B cell (primary cell): ENCODE measurements at regions of chr2 and their contacts with region 1.

Region 1: DNA sequence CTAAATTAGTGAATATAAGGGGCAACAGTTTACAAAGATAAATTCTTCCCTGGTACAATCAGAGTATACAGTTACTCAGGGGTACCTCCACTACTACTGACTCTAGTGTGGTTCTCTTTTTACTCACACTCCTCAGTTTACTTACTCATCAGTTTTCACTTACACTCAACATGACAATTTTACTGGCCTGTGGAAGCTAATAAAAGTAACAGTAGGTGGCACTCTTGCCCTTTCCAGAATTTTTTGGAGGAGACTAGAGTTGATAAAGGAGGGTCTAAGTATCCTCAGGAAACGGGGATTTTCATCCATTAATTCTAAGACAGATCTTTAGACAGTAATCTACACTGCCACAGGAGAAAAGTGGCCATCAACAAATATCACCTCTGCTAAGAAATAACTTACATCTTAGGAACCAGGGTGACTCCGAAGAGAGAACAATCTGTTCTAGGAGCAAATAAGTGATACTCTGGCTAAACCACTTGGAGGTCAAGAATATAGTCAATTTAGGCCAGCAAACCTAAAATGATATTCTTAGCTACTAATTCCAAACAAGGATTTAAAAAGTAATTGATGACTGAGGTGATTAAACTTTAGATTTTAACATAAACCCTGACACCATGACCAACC is 61.3 kb downstream of the ATL2 start:
- DNase-seq: peak; percentile 61
- ATAC-seq: peak; percentile 47
- H3K4me3 ChIP-seq: no peak overlapping the region
- H3K4me3 Mint-ChIP-seq: no peak overlapping the region
- H3K27ac ChIP-seq: no peak overlapping the region
- H3K27ac Mint-ChIP-seq: no peak overlapping the region
- H3K4me1 ChIP-seq: no peaks in the 10 kb centered on the region
- H3K4me1 Mint-ChIP-seq: no peaks in the 10 kb centered on the region
- H3K27me3 ChIP-seq: no peaks in the 10 kb centered on the region
- H3K27me3 Mint-ChIP-seq: no peaks in the 10 kb centered on the region
- CTCF ChIP-seq: peak; percentile 76

Region 2: DNA sequence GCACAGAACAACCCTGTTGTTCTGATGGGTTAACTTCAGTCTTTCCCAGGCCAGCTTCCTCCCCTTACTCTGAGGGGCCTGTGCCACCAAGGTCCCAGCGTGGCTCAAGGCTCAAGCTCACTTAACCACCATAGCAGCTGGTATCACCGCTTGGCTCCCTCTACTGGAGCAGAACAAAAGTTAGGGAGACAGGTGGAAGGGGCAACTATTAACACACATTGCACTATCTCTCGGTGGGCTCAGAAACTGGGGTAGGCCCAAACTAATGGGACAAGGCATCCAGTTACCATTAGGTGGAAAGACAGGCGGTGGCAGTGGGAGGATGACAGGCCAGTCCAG is 149.9 kb after region 1 on chr2:
- CTCF ChIA-PET with region 1: interaction called, 40 read pairs
- POLR2A ChIA-PET with region 1: no interaction called
- intact Hi-C with region 1: loop called (anchors 1 kb)
- DNase-seq: peak; percentile 30
- ATAC-seq: no peak
- H3K4me3 ChIP-seq: no peak overlapping the region
- H3K4me3 Mint-ChIP-seq: no peak overlapping the region
- H3K27ac ChIP-seq: no peak overlapping the region
- H3K27ac Mint-ChIP-seq: no peak overlapping the region
- H3K4me1 ChIP-seq: no peaks in the 10 kb centered on the region
- H3K4me1 Mint-ChIP-seq: no peaks in the 10 kb centered on the region
- H3K27me3 ChIP-seq: no peaks in the 10 kb centered on the region
- H3K27me3 Mint-ChIP-seq: peaks cover 16% of the 10 kb centered on the region
- CTCF ChIP-seq: peak; percentile 18

Region 3: GRCh38 chr2:38480617-38481016 is 164.8 kb after region 1 on chr2:
- CTCF ChIA-PET with region 1: no interaction called
- POLR2A ChIA-PET with region 1: no interaction called
- intact Hi-C with region 1: no loop called
- DNase-seq: no peak
- ATAC-seq: no peak
- H3K4me3 ChIP-seq: no peak overlapping the region
- H3K4me3 Mint-ChIP-seq: no peak overlapping the region
- H3K27ac ChIP-seq: no peak overlapping the region
- H3K27ac Mint-ChIP-seq: no peak overlapping the region
- H3K4me1 ChIP-seq: no peaks in the 10 kb centered on the region
- H3K4me1 Mint-ChIP-seq: no peaks in the 10 kb centered on the region
- H3K27me3 ChIP-seq: peaks cover 0 to 3% (median 0%) of the 10 kb centered on the region in 4 experiments
- H3K27me3 Mint-ChIP-seq: peaks cover 9% of the 10 kb centered on the region
- CTCF ChIP-seq: no peak

Region 4: GRCh38 chr2:38498045-38498481 is 182.2 kb after region 1 on chr2:
- CTCF ChIA-PET with region 1: interaction called, 10 read pairs
- POLR2A ChIA-PET with region 1: no interaction called
- intact Hi-C with region 1: no loop called
- DNase-seq: peak; percentile 62
- ATAC-seq: peak; percentile 95
- H3K4me3 ChIP-seq: peak overlapping the region in 1 of 5 experiments; percentile 3
- H3K4me3 Mint-ChIP-seq: peak overlapping the region; percentile 48
- H3K27ac ChIP-seq: peak overlapping the region in 1 of 2 donors; percentile 49
- H3K27ac Mint-ChIP-seq: peak overlapping the region; percentile 67
- H3K4me1 ChIP-seq: peaks cover 10 to 21% of the 10 kb centered on the region in 2 donors
- H3K4me1 Mint-ChIP-seq: peaks cover 15% of the 10 kb centered on the region
- H3K27me3 ChIP-seq: peaks cover 0 to 4% (median 0%) of the 10 kb centered on the region in 4 experiments
- H3K27me3 Mint-ChIP-seq: peaks cover 9% of the 10 kb centered on the region
- CTCF ChIP-seq: no peak

Region 5: GRCh38 chr2:38515160-38516074 is 199.6 kb after region 1 on chr2:
- CTCF ChIA-PET with region 1: interaction called, 191 read pairs
- POLR2A ChIA-PET with region 1: no interaction called
- intact Hi-C with region 1: no loop called
- DNase-seq: no peak
- ATAC-seq: no peak
- H3K4me3 ChIP-seq: no peak overlapping the region
- H3K4me3 Mint-ChIP-seq: no peak overlapping the region
- H3K27ac ChIP-seq: no peak overlapping the region
- H3K27ac Mint-ChIP-seq: no peak overlapping the region
- H3K4me1 ChIP-seq: no peaks in the 10 kb centered on the region
- H3K4me1 Mint-ChIP-seq: no peaks in the 10 kb centered on the region
- H3K27me3 ChIP-seq: peaks cover 0 to 5% (median 0%) of the 10 kb centered on the region in 4 experiments
- H3K27me3 Mint-ChIP-seq: peaks cover 13% of the 10 kb centered on the region
- CTCF ChIP-seq: no peak

Region 6: DNA sequence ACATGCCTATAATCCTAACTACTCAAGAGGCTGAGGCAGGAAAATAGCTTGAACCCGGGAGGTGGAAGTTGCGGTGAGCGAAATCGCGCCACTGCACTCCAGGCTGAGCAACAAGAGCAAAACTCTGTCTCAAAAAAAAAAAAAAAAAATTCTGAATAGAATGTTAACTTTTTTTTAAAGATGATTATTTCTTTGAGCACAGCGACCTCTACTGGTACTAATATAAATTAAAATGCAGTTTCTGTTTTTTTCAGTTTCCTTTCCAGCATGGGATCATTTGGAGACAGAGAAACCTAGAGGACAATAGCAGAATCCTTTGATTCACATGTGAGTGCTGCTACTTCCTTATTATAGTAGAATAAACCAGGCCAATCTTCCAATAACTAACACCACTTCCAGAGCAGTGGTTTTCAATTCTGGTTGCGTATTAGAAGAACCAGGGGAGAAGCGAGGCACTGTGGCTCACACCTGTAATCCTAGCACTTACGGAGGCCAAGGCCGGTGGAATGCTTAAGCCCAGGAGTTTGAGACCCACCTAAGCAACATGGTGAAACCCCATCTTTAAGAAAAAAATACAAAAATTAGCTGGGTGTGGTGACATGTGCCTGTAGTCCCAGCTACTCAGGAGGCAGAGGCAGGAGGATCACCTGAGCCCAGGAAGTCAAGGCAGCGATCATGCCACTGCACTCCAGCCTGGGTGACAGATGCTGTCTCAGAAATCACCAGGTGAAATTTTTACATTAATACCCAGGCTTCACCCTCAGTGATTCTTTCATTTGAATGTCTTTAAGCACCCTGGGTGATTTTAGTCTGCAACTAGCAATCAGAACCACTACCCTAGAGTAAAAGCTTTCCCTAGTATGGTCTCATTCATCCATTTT is 425.3 kb after region 1 on chr2:
- CTCF ChIA-PET with region 1: interaction called, 5 read pairs
- POLR2A ChIA-PET with region 1: no interaction called
- intact Hi-C with region 1: loop called (anchors 5 kb)
- DNase-seq: peak; percentile 69
- ATAC-seq: peak; percentile 16
- H3K4me3 ChIP-seq: no peak overlapping the region
- H3K4me3 Mint-ChIP-seq: no peak overlapping the region
- H3K27ac ChIP-seq: peak overlapping the region in 1 of 2 donors; percentile 4
- H3K27ac Mint-ChIP-seq: peak overlapping the region; percentile 50
- H3K4me1 ChIP-seq: no peaks in the 10 kb centered on the region
- H3K4me1 Mint-ChIP-seq: peaks cover 24% of the 10 kb centered on the region
- H3K27me3 ChIP-seq: no peaks in the 10 kb centered on the region
- H3K27me3 Mint-ChIP-seq: no peaks in the 10 kb centered on the region
- CTCF ChIP-seq: peak; percentile 80